Activated T-helper 1 cell treated with anti-CD3 and anti-CD28 coated beads, Interleukin-12 subunit alpha, Interleukin-12 subunit beta, Interleukin-2, Interleukin-4 antibody, amounts not matched to agents 30 ng/mL and 10 ng/mL and 1 ng/mL, durations not matched to agents 14 hours and 24 hours and 36 hours (primary cell): ENCODE measurements at regions of chr18 and their contacts with region 1.

Region 1: DNA sequence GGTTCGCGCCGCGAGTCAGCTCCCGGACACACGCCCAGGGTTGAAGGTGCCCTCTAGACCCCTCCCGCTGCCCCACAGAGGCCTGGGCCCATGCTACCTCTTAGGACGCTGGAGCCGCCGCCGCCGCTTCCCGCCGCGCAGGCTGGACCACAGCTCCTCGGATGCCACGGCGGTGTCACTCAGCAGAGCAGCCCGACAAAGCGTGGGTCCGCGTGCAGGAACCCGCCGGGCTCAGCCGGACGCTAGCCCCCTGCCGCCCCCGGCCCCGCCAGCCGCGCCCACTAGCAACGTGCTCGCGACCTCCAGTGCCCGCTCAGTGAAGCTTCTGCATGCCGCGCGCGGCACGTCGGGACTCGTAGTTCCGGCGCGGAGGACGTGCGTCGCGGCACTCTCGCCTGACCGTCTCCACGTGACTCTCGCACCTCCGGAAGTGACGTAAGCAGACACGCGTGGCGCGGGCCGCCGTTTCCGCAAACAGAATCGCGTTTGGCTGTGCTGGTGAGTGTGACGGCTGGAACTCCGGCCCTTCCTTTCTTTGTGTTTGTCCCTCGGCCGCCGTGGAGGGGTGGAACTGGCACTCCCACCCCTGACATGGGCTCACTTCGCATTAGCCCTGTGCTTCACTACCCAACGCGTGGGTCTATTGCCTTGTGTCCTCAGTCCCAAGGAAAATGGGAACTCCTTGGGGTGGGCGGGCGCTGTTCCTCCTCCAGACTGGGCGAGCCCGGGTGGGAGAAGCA is at the starts of genes FAM210A and RNMT:
- DNase-seq: peak; percentile 94
- H3K4me3 Mint-ChIP-seq: peak within 1 kb of the TSS; percentile 93
- H3K27ac Mint-ChIP-seq: peak within 1 kb of the TSS; percentile 86
- H3K4me1 Mint-ChIP-seq: peaks cover 72% of the 10 kb centered on the region
- H3K27me3 Mint-ChIP-seq: no peaks in the 10 kb centered on the region
- total RNA-seq, gene FAM210A: 27.7 and 29.5 TPM in 2 replicates
- total RNA-seq, gene RNMT: 55.8 and 60.6 TPM in 2 replicates

Region 2: DNA sequence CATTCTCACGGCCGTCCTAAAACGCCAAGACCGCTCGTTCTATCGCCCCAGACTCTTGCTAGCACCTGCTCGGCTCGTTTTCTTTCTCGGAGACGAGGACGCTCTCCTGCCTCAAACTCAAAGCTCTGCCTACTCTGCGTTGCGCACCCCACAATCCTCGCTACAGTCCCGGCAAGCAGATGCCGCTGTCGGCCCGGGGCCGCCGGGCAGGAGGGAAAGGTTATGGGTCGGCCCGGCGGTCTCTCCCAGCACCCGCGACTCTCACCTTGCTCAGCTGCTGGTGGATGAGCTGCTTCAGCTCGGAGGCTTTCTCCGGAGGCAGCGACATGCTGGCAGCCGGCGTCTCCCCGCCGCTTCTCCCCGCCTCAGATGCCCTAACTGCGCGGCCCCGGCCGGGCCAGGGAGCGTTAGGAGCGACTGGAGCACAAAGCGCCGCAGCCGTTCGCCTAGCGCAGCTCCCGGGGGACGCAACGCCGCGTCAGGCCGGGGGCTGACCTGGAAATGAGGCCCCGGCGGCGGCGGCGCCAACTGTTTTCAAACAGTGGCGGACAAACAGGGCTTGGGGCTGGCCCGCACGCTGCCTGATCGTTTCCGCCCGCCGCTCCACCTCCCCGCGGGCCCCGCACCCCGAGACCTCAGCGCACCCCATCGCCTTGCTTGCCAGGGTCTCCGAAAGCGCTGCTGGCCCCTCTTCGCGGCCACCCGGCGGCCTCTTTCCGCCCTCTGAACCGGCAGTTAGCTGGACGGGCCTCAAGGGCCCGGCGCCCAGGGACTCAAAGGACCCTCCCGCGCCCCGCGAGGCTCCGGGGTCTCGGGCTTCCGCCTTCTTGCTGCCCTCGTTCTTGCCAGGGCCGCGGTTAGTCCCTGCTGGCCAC is 1023.9 kb before region 1 on chr18 and contains the starts of genes CEP76 and PSMG2:
- intact Hi-C with region 1: loop called (anchors 1 kb)
- DNase-seq: peak; percentile 80
- H3K4me3 Mint-ChIP-seq: peak within 1 kb of the TSS; percentile 97
- H3K27ac Mint-ChIP-seq: peak within 1 kb of the TSS; percentile 92
- H3K4me1 Mint-ChIP-seq: peaks cover 54% of the 10 kb centered on the region
- H3K27me3 Mint-ChIP-seq: no peaks in the 10 kb centered on the region
- total RNA-seq, gene CEP76: 16.1 and 17.5 TPM in 2 replicates
- total RNA-seq, gene PSMG2: 113 and 118 TPM in 2 replicates

Region 3: DNA sequence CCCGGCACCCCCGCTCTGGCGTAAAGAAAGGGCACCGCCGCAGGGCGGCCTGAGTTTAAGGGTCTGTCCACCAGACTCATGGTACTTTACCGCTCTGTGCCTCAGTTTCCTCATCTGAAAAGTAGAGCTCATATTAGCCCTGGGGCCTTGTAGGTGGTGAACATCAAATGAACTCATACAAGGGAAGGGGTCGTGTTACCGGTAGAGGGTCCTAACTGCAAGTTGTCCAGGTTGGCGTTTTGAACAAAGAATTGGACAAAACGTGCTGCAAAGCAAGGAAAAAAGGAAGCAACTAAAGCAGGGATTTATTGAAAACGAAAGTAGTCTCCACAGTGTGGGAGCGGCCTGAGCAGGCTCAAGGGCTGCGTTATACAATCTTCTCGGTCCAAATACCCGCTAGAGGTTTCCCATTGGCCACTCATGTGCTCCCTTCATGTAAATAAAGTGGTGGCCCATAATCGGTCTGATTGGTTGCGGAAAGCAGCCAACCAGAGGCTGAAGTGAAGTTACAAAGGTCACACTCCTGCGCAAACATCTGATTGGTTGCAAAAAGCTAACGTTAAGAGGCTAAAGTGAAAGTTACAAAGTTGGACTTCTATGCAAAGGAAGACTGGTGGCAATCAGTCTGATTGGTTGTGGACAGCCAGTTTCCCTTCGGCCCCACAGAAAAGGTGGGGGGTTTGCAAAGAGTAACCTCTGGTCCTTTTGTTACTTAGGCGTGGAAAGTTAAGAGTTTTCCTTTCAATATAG is 588.6 kb before region 1 on chr18:
- intact Hi-C with region 1: loop called (anchors 1 kb)
- DNase-seq: peak; percentile 76
- H3K4me3 Mint-ChIP-seq: peak overlapping the region; percentile 91
- H3K27ac Mint-ChIP-seq: peak overlapping the region; percentile 79
- H3K4me1 Mint-ChIP-seq: peaks cover 21% of the 10 kb centered on the region
- H3K27me3 Mint-ChIP-seq: peaks cover 11% of the 10 kb centered on the region

Region 4: GRCh38 chr18:13577091-13577697 is 149.2 kb before region 1 on chr18:
- intact Hi-C with region 1: loop called (anchors 5 kb)
- DNase-seq: peak; percentile 41
- H3K4me3 Mint-ChIP-seq: peak overlapping the region; percentile 67
- H3K27ac Mint-ChIP-seq: peak overlapping the region; percentile 87
- H3K4me1 Mint-ChIP-seq: peaks cover 56% of the 10 kb centered on the region
- H3K27me3 Mint-ChIP-seq: no peaks in the 10 kb centered on the region

Region 5: DNA sequence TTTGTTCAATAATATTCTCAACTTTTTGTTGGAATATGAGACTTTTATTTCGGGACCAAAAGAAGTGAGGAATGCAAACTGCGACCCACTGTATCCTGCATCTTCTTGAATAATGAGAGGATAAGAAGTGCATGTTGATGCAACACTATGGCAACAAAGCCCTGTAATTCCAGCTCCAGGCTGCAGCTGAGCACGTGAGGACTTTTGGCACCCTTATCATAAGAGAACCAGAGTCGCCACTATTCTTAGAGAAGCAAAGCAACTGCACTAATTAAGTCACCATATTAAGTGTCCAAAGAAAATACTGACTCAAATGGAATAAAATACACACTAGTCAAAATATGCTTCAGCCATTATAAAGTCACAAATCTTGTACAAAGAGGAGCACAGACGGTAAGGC is 65.9 kb before region 1 on chr18:
- intact Hi-C with region 1: loop called (anchors 2 kb)
- DNase-seq: no peak
- H3K4me3 Mint-ChIP-seq: no peak overlapping the region
- H3K27ac Mint-ChIP-seq: no peak overlapping the region
- H3K4me1 Mint-ChIP-seq: no peaks in the 10 kb centered on the region
- H3K27me3 Mint-ChIP-seq: no peaks in the 10 kb centered on the region